ENCODE measurements at regions of chr13 and their contacts with region 1.

Region 1: GRCh38 chr13:99288089-99288488 is 19.1 kb downstream of the GPR183 start:
- DNase-seq: peak; percentile 87
- ATAC-seq: peak; percentile 79
- H3K4me3 Mint-ChIP-seq: no peak overlapping the region
- H3K27ac Mint-ChIP-seq: peak overlapping the region; percentile 90
- H3K4me1 Mint-ChIP-seq: peaks cover 91% of the 10 kb centered on the region
- H3K27me3 Mint-ChIP-seq: no peaks in the 10 kb centered on the region

Region 2: GRCh38 chr13:99275093-99275469 is 13.0 kb before region 1 on chr13:
- CTCF ChIA-PET with region 1: interaction called, 49 read pairs
- POLR2A ChIA-PET with region 1: interaction called, 5 read pairs
- intact Hi-C with region 1: no loop called
- DNase-seq: peak; percentile 64
- ATAC-seq: peak; percentile 88
- H3K4me3 Mint-ChIP-seq: peak overlapping the region; percentile 6
- H3K27ac Mint-ChIP-seq: peak overlapping the region; percentile 66
- H3K4me1 Mint-ChIP-seq: peaks cover 91% of the 10 kb centered on the region
- H3K27me3 Mint-ChIP-seq: no peaks in the 10 kb centered on the region

Region 3: GRCh38 chr13:99301913-99302636 is 14.0 kb after region 1 on chr13:
- CTCF ChIA-PET with region 1: interaction called, 9 read pairs
- POLR2A ChIA-PET with region 1: interaction called, 10 read pairs
- intact Hi-C with region 1: loop called in 1 of 2 experiments (anchors 2 kb)
- DNase-seq: no peak
- ATAC-seq: no peak
- H3K4me3 Mint-ChIP-seq: peak overlapping the region; percentile 85
- H3K27ac Mint-ChIP-seq: peak overlapping the region; percentile 99
- H3K4me1 Mint-ChIP-seq: peaks cover 69% of the 10 kb centered on the region
- H3K27me3 Mint-ChIP-seq: no peaks in the 10 kb centered on the region

Region 4: DNA sequence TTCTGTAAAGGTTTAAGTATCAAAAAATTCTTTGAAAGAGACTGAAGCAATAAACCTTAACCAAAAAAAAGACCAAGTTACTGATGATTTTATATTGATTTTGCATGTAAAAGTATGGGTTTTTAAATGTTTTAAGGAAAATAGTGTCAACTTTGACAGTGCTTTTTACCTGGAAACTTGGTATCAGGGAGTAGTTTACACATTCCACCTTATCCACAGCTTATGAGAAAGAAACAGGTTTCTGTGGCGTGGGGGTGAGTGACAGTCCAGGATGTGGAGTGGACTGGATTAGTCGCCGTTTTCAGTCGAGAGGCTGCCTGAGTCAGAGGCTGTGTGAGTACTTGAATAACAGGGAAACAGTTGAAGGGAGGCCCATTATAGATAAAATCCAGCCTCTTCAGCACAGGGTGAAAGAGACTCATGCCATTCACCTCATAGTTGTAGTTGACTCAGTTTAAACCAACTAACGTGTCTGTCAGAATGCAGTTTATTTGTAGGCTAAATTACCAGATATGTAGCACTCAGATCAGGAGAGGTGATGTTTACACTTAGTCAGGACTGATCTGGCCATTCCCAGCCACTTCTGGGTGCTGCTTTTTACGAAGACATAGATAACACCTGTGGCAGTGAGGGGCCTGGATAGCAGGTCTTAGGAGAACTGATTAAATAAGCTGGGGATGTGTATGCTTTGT is 19.7 kb after region 1 on chr13:
- CTCF ChIA-PET with region 1: interaction called, 7 read pairs
- POLR2A ChIA-PET with region 1: interaction called, 10 read pairs
- intact Hi-C with region 1: loop called in 1 of 2 experiments (anchors 2 kb)
- DNase-seq: peak; percentile 88
- ATAC-seq: peak; percentile 82
- H3K4me3 Mint-ChIP-seq: peak overlapping the region; percentile 85
- H3K27ac Mint-ChIP-seq: peak overlapping the region; percentile 98
- H3K4me1 Mint-ChIP-seq: peaks cover 73% of the 10 kb centered on the region
- H3K27me3 Mint-ChIP-seq: no peaks in the 10 kb centered on the region

Region 5: GRCh38 chr13:99322297-99323103 is 34.4 kb after region 1 on chr13:
- CTCF ChIA-PET with region 1: interaction called, 3 read pairs
- POLR2A ChIA-PET with region 1: no interaction called
- intact Hi-C with region 1: loop called (anchors 1 to 2 kb)
- DNase-seq: peak; percentile 66
- ATAC-seq: peak; percentile 78
- H3K4me3 Mint-ChIP-seq: peak overlapping the region; percentile 26
- H3K27ac Mint-ChIP-seq: peak overlapping the region; percentile 93
- H3K4me1 Mint-ChIP-seq: peaks cover 81% of the 10 kb centered on the region
- H3K27me3 Mint-ChIP-seq: no peaks in the 10 kb centered on the region

Measured in activated CD4-positive, alpha-beta T cell treated with anti-CD3 and anti-CD28 coated beads for 36 hours (primary cell).